HepG2 (cell line): ENCODE measurements at regions of chr6 and their contacts with region 1.

Region 1: GRCh38 chr6:2209226-2209809 is 36.1 kb downstream of the GMDS start:
- DNase-seq: peak; percentile 72
- ATAC-seq: peak; percentile 99
- H3K4me3 ChIP-seq: no peak overlapping the region
- H3K27ac ChIP-seq: no peak overlapping the region
- H3K4me1 ChIP-seq: peaks cover 36% of the 10 kb centered on the region; the same call in 1 of the 2 replicates
- H3K27me3 ChIP-seq: no peaks in the 10 kb centered on the region
- CTCF ChIP-seq: peak; percentile 88
- EP300 ChIP-seq: 0 out of 4 replicates have a peak, but pooled peaks of 1 of the 2 experiments have one; percentile 12
- POLR2A ChIP-seq: no peak
- RAD21 ChIP-seq: peak; percentile 85

Region 2: DNA sequence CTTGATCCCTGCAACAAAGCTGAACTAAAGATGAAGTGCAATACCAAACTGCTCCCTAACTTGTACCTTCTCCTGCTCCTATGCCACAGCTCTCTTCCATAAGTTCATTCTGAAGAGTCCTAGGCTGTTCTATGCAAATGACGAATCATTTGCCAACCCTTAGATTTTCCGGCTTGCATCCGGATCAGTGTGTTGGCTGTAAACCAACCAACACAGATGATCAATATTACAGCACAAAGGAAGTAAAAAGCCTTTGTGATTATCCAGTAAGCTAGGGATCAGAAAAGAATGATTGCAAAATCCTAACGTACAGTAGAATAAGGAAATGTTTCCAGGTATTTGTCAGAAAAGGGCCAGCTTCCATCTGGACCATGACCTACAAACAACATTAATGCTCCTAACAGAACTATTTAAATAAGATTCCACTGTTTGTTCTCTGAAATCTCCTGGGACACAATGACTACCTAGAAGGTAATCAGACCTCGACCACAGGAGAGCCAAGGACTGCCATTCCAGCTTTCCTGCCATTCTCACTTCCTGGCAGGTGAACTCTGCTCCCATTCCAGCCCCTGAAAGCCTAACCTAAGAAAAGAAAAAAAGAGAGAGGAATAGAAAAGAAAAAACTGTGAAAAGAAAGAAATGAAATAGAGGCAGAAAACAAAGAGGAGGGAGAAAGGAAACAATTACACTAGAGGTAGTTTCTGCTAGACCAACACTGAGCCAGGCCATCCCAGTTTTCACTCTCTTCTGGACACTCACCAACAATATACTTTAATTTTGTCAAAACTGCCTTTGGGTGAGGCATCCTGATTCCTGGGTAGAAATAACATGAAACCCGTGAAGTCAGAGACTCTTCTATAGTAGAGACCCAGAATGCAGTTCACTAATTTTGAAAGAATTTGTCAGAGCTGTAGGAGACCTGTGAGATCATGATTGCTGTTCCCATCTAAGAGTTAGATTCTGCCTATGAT is 16.4 kb after region 1 on chr6:
- CTCF ChIA-PET with region 1: no interaction called
- POLR2A ChIA-PET with region 1: interaction called, 14 read pairs
- in situ Hi-C with region 1: no loop called
- intact Hi-C with region 1: no loop called
- DNase-seq: peak; percentile 99
- ATAC-seq: peak; percentile 88
- H3K4me3 ChIP-seq: peak overlapping the region; percentile 1 to 49 (median 7); a peak in 3 of 6 replicates
- H3K27ac ChIP-seq: peak overlapping the region; percentile 85
- H3K4me1 ChIP-seq: peaks cover 99% of the 10 kb centered on the region
- H3K27me3 ChIP-seq: no peaks in the 10 kb centered on the region
- CTCF ChIP-seq: no peak
- EP300 ChIP-seq: peak; percentile 34 to 96; a peak in 3 of 4 replicates
- POLR2A ChIP-seq: peak in 1 of 2 experiments; percentile 39; a peak in 1 of 4 replicates
- RAD21 ChIP-seq: no peak

Region 3: DNA sequence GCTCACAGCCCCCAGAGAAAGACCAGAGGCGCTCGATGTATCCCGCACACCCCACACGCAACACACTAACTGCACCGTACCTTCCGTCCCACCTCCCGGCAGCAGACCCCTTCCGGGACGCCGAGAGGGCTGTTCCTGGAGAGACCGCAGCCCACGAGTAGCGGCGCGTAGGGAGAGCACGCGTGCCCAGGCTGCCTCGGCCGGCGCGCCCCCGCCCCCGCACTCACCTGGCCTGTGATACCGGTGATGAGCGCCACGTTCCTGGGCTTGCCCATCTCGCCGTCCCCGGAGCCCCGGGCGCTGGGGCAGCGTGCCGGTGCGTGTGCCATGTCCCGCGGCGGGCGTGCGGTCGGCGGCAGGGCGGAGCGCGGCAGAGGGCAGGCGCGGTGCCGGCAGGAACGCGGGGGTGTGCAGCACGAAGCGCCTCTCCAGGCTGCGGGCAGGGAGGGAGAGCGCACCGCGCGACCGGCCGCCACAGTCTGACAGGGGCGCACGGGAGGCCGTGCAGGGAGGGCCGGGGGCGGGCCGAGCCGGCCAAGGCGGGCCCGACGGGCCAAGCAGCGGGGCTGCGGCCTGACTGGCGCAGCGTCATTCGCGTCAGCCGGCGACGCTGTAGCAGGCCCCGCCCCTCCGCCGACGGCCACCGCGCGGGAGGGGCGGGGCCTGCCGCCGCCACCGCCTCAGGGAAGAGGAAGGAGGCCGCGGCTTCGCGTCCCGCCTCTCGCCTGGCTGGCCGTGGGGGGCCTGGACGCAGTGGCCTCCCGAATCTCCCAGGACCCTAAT is 36.0 kb after region 1 on chr6 and contains the start of gene GMDS:
- CTCF ChIA-PET with region 1: no interaction called
- POLR2A ChIA-PET with region 1: interaction called, 14 read pairs
- in situ Hi-C with region 1: no loop called
- intact Hi-C with region 1: loop called (anchors 1 kb)
- DNase-seq: peak; percentile 85
- ATAC-seq: peak; percentile 97
- H3K4me3 ChIP-seq: peak within 1 kb of the TSS; percentile 90 to 97 (median 96)
- H3K27ac ChIP-seq: peak within 1 kb of the TSS; percentile 92
- H3K4me1 ChIP-seq: peaks cover 68% of the 10 kb centered on the region
- H3K27me3 ChIP-seq: no peaks in the 10 kb centered on the region; a peak in 1 of 5 replicates
- CTCF ChIP-seq: peak; percentile 37; the same call in 1 of the 2 replicates
- EP300 ChIP-seq: 0 out of 4 replicates have a peak, but pooled peaks of 1 of the 2 experiments have one; percentile 1
- POLR2A ChIP-seq: peak; percentile 87 to 97
- RAD21 ChIP-seq: peak; percentile 71
- total RNA-seq, gene GMDS: 59.6 and 64.4 TPM in 2 replicates

Region 4: GRCh38 chr6:2634139-2634964 is 425.0 kb after region 1 on chr6:
- CTCF ChIA-PET with region 1: no interaction called
- POLR2A ChIA-PET with region 1: no interaction called
- in situ Hi-C with region 1: loop called (anchors 10 kb)
- intact Hi-C with region 1: loop called (anchors 1 kb)
- DNase-seq: peak; percentile 51
- ATAC-seq: peak; percentile 93
- H3K4me3 ChIP-seq: peak overlapping the region; percentile 28 to 68 (median 32); a peak in 5 of 6 replicates
- H3K27ac ChIP-seq: no peak overlapping the region
- H3K4me1 ChIP-seq: peaks cover 31% of the 10 kb centered on the region
- H3K27me3 ChIP-seq: peaks cover 1 to 72% of the 10 kb centered on the region in 2 experiments
- CTCF ChIP-seq: peak; percentile 98
- EP300 ChIP-seq: no peak
- POLR2A ChIP-seq: no peak
- RAD21 ChIP-seq: peak; percentile 98